Activated CD4-positive, alpha-beta T cell treated with anti-CD3 and anti-CD28 coated beads, Interleukin-2, amount 10 ng/mL, durations not matched to agents 7 days and 5 days (primary cell): ENCODE measurements at regions of chr11 and their contacts with region 1.

Region 1: DNA sequence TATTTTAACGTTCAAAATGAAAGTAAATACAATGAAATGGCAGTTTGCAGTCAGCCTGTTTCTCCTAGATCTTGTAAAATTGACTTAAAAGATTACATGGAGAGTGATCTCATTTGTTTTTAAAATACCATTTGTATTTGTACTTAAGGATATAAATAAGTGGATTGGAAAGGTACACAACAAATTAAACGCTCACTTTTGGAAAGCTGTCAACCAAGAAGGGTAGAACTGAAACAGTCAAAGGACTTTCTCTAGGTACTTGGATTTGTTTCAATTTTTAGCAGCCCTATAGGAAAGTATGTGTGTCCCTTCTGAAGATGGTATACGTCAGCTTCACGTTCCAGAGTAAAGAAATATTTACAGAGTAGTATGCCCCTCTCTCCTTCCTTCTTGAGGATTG is 7.3 kb downstream of the TBRG1 start:
- DNase-seq: no peak
- H3K4me3 Mint-ChIP-seq: no peak overlapping the region
- H3K27ac Mint-ChIP-seq: no peak overlapping the region
- H3K4me1 Mint-ChIP-seq: peaks cover 11% of the 10 kb centered on the region
- H3K27me3 Mint-ChIP-seq: no peaks in the 10 kb centered on the region

Region 2: DNA sequence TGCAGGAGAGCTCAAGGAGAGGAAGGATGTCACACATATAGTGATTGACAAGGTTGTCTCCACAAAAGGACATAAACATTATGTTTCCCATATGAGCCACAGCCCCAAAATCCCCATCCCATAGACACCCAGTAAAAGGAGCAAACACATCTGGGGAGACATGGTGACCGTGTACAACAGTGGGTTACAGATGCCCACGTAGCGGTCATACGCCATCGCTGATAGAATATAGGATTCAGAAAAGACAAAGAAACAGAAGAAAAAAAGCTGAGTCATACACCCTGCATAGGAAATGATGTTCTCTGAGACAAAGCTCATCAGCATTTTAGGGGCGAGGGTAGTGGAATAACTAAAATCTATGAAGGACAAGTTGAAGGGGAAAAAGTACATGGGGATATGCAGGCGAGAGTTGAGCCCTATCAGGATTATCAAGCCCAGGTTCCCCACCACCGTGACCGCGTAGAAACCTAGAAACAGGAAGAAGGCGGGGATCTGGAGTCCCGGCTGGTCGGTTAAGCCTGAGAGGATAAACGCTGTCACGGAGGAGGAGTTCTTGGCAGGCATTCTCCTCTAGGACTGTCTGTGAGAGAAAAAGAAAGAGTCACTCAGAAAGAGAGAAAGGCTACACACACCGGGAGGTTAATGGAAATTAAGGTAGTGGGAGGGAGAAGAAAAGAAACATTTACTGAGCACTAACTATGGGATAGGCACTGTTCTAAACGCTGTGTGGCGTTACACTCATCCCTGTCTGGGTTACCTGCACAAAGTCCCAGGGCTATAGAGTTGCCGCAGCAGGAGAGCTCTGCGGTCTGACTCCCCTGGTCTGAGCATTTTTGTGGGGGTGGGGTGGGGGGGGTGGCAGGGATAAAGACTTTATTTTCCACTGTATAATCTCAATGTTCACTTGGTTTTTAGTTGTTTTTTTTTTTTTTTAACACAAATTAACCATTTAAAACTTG is 148.3 kb before region 1 on chr11:
- CTCF ChIA-PET with region 1: no interaction called
- POLR2A ChIA-PET with region 1: no interaction called
- DNase-seq: no peak
- H3K4me3 Mint-ChIP-seq: peak overlapping the region; percentile 46
- H3K27ac Mint-ChIP-seq: no peak overlapping the region
- H3K4me1 Mint-ChIP-seq: peaks cover 11% of the 10 kb centered on the region
- H3K27me3 Mint-ChIP-seq: peaks cover 17% of the 10 kb centered on the region

Region 3: DNA sequence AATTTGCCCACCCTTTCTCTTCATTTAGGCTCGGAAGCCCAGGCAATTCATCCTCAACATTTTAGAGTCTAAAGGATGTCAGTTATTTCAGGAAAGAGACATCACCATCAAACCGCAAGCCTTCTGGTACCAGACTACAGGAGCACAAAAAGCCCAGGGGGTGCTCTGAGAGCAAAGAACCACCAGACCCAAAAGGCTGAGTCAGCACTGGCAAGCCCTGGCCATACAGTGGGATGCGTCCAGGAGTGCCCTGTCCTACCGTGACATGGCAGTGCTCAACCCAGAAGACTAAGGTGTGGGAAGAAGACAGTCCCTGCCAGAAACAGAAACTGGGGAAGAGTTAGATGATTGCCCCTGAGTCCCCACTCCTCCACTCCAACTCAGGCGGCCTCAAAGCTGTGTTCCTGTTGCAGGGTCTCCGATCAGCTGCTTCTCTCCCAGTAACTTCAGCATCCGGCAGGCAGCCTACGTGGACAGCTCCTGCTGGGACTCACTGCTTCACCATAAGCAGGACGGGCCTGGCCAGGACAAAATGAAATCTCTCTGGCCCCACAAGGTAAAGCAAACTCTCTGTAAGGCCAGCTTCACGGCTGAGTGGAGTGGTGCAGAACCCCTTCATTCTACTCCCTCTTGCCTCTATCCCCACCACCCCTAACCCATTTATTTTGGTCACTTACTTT is 17.3 kb before region 1 on chr11:
- CTCF ChIA-PET with region 1: no interaction called
- POLR2A ChIA-PET with region 1: no interaction called
- DNase-seq: no peak
- H3K4me3 Mint-ChIP-seq: no peak overlapping the region
- H3K27ac Mint-ChIP-seq: no peak overlapping the region
- H3K4me1 Mint-ChIP-seq: peaks cover 9% of the 10 kb centered on the region
- H3K27me3 Mint-ChIP-seq: no peaks in the 10 kb centered on the region

Region 4: GRCh38 chr11:124643605-124644425 is 13.9 kb after region 1 on chr11:
- CTCF ChIA-PET with region 1: interaction called, 11 read pairs
- POLR2A ChIA-PET with region 1: no interaction called
- DNase-seq: no peak
- H3K4me3 Mint-ChIP-seq: no peak overlapping the region
- H3K27ac Mint-ChIP-seq: no peak overlapping the region
- H3K4me1 Mint-ChIP-seq: no peaks in the 10 kb centered on the region
- H3K27me3 Mint-ChIP-seq: no peaks in the 10 kb centered on the region